Dorsolateral prefrontal cortex (tissue), 120 donors: ENCODE measurements at regions of chr6 and their contacts with region 1.

Region 1: DNA sequence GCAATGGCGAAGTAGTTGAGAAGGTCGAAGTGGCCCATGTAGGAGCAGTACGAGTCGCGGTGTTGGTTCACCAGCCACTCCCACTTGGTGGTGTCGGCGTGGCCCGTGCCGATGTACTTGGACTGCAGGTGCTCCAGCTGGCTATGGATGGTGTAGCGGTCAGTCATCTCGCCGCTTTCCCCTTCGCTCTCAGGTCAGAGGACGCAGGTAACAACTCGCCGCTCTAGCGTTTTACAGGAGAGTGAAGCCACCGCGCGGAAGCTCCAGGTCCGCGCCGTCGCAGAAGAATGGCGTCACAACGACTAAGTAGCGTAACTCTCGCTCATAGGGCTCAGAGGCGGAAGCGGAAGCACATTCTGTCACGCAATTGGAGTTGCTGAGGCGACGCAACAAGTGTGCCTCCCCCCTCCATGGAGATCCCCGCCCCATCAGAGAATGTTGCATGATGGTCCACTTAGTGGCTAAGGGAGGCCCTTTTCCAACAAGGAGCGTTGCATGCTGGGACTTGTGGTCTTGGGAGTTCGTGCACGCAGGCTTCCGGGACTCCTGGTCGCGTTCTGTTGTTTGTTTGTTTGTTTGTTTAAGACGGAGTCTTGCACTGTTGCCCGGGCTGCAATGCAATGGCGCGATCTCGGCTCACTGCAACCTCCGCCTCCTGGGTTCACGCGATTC is at the start of gene SF3B5:
- DNase-seq: peak; percentile 97 to 99 (median 99)
- H3K4me3 ChIP-seq: peak within 1 kb of the TSS; percentile 66 to 100 (median 94)
- H3K27ac ChIP-seq: peak within 1 kb of the TSS in 54 of 59 donors; percentile 11 to 90 (median 75)
- H3K27me3 ChIP-seq: no peaks in the 10 kb centered on the region
- CTCF ChIP-seq: peak in 31 of 56 donors; percentile 8 to 61 (median 29)
- total RNA-seq, gene SF3B5: 62.2 to 97.4 (median 77.0) TPM

Region 2: DNA sequence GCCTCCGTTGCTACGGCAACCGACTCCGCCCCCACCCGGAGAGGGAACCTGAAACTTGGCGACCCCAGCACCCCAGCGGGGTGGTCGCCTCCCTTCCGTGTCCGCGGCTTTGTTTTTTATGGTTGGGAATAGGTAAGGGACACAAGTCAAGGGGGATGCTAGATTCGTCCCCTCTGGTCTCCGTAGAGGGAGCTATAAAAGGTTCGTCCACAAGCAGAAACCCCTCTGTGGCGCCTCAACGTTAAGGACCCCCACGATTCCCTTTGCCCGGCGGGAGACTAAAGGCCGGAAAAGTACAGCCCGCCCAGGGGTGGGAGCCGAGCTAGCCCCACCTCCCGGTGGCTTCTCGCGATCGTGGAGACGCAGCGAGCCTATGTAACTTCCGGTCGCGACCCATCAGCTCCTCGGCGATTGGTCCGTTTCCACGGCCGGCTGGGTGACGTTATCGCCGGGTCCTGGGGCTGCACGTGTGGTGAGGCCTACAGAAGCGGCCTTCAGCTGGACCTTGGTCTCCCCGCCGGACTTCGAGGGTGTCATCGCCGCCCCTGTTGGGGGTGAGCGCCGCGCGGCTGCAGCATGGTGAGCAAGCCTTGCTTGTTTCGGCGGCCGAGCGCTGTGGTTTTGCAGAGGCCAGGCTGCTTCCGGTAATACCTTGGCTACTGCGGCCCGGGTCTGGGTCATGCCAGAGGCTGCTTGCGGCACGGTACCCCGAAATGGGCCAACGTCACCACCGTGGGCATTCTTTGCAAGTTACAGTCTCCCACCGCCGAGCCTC is 252.4 kb before region 1 on chr6 and contains the start of gene LTV1:
- intact Hi-C with region 1: loop called (anchors 2 to 5 kb)
- DNase-seq: peak; percentile 94 to 99 (median 97)
- H3K4me3 ChIP-seq: peak within 1 kb of the TSS; percentile 50 to 99 (median 90)
- H3K27ac ChIP-seq: peak within 1 kb of the TSS; percentile 62 to 98 (median 93)
- H3K27me3 ChIP-seq: no peaks in the 10 kb centered on the region
- CTCF ChIP-seq: peak in 33 of 56 donors; percentile 10 to 53 (median 35)
- total RNA-seq, gene LTV1: 8.2 to 21.6 (median 13.4) TPM